ENCODE measurements at regions of chr5 and their contacts with region 1.

Region 1: DNA sequence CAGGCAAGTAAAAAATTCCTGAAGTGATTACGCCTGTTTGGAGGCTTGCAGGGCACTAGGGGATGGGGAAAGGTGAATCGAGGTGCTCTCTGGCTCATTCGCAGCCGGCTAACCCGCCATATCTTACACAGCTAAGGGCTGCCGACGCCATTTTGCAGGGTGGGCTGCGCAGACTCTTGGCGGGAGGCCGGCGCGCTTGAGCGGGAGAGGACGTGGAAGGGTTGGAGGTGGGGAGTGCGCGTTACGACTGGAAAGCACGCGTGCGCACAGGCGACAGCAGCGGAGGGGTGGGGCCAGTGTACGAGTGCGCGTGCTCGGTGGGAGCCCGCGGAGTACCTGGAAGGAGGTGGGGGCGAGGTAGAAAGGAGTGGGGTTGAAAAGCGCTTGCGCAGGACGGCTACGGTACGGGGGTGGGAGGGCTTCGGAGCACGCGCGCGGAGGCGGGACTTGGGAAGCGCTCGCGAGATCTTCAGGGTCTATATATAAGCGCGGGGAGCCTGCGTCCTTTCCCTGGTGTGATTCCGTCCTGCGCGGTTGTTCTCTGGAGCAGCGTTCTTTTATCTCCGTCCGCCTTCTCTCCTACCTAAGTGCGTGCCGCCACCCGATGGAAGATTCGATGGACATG is at the start of gene NPM1:
- DNase-seq: peak; percentile 92
- ATAC-seq: peak; percentile 85
- H3K4me3 Mint-ChIP-seq: peak within 1 kb of the TSS; percentile 99
- H3K27ac Mint-ChIP-seq: peak within 1 kb of the TSS; percentile 98
- H3K4me1 Mint-ChIP-seq: peaks cover 52% of the 10 kb centered on the region
- H3K27me3 Mint-ChIP-seq: no peaks in the 10 kb centered on the region
- CTCF ChIP-seq: no peak
- total RNA-seq, gene NPM1: 1,505 and 1,563 TPM in 2 replicates

Region 2: DNA sequence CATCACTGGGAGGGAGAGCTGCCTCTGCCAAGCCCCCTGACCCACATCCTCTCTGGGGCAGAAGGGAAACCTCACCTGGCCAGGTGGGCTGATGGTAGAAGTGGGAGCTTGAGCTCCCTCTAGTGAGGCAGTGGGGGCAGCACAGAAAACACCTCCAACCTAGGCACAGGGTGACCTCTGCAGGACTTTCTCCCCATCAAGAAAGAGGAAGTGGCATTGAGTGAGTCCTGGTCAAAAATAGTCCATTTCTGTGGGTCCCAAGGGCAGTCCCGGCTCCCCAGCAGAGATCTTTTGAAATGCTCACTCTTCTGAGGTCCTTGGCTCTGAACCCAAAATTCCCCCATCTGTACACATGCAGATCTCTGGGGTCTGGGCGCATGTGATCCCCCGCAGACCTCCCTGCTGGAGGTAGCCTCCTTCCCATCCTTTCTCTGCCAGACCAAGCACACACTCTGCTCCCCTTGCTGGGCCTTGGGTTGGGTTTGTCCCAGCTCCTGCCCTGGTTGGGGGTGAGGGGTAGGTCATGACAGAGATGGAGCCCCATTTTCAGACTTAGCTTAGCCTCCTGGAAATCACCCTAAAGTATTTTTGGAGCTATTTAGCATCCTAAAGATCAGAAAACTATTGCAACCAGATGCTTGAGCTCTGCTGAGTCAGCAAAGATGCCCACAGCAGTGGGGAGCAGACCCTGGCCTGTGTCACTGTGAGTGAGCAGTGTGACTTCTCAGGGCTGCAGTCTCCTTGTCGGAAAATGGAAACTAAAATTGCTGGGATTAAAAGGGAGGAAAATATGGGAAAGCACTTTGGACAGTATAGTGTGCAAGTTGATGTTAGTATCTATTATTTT is 1048.3 kb before region 1 on chr5:
- CTCF ChIA-PET with region 1: no interaction called
- POLR2A ChIA-PET with region 1: no interaction called
- intact Hi-C with region 1: loop called (anchors 10 kb)
- DNase-seq: peak; percentile 35
- ATAC-seq: peak; percentile 90
- H3K4me3 Mint-ChIP-seq: no peak overlapping the region
- H3K27ac Mint-ChIP-seq: no peak overlapping the region
- H3K4me1 Mint-ChIP-seq: peaks cover 20% of the 10 kb centered on the region
- H3K27me3 Mint-ChIP-seq: no peaks in the 10 kb centered on the region
- CTCF ChIP-seq: peak; percentile 48

Region 3: DNA sequence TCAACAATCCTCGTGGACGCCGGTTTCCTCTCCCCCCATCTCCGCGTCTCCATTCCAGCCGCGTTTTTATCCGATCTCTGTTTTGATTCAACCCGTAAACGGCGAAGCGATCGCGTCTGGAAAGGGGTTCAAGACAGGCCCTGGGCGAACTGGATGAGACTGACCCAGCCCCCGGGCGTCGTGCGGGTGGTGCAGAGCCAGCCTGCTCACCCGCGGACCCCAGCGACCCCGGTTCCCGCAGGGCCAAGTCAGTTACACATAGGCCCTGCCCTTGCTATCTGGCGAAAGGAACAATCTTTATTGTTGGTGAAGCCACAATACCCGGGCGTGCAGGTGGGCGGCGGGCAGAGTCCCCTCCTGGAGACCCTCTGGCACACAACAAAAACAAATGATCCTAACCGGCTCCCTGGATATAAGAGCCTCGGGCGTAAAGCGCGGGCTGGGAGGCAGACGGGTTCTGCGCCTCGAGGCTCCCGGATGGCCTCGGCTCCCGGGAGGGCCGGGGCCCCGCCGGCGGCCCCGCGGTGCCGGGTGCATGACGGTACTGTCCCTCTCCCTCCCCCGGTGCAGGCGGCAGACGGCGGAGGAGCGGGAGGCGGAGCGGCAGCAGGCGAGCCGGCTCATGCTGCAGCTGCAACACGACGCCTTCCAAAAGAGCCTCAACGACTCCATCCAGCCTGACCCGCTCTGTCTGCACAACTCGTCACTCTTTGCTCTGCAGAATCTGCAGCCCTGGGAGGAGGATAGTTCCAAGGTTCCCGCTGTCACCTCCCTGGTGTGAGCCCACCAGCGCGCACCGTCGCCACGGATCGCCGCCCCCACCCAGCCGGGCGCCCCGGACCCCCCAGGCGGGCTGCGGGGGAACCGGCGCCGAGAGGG is 76.4 kb before region 1 on chr5:
- CTCF ChIA-PET with region 1: no interaction called
- POLR2A ChIA-PET with region 1: interaction called, 5 read pairs
- intact Hi-C with region 1: loop called (anchors 2 kb)
- DNase-seq: no peak
- ATAC-seq: no peak
- H3K4me3 Mint-ChIP-seq: no peak overlapping the region
- H3K27ac Mint-ChIP-seq: no peak overlapping the region
- H3K4me1 Mint-ChIP-seq: peaks cover 17% of the 10 kb centered on the region
- H3K27me3 Mint-ChIP-seq: peaks cover 51% of the 10 kb centered on the region
- CTCF ChIP-seq: no peak

Region 4: DNA sequence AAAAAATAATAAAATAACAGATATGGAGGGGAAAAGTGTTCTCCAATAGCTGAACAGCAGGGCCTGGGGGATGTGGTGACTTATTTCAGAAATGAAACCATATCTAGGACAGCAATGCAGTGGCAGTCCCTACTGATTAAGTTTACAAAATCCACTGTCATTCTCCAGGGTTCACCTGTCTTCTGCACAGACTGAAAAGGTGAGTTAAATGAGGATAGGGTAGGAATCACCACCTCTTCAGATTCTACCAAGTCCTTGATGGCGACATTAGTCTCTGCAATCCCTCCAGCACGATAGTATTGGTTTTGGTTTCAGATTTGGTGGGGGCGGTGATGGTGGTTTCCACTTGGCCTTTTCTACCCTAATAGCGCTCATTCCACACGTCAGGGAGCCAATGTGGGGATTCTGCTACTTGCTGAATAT is 32.1 kb before region 1 on chr5:
- CTCF ChIA-PET with region 1: no interaction called
- POLR2A ChIA-PET with region 1: no interaction called
- intact Hi-C with region 1: loop called (anchors 2 kb)
- DNase-seq: no peak
- ATAC-seq: peak; percentile 74
- H3K4me3 Mint-ChIP-seq: peak overlapping the region; percentile 59
- H3K27ac Mint-ChIP-seq: no peak overlapping the region
- H3K4me1 Mint-ChIP-seq: peaks cover 2% of the 10 kb centered on the region
- H3K27me3 Mint-ChIP-seq: peaks cover 8% of the 10 kb centered on the region
- CTCF ChIP-seq: no peak

Region 5: DNA sequence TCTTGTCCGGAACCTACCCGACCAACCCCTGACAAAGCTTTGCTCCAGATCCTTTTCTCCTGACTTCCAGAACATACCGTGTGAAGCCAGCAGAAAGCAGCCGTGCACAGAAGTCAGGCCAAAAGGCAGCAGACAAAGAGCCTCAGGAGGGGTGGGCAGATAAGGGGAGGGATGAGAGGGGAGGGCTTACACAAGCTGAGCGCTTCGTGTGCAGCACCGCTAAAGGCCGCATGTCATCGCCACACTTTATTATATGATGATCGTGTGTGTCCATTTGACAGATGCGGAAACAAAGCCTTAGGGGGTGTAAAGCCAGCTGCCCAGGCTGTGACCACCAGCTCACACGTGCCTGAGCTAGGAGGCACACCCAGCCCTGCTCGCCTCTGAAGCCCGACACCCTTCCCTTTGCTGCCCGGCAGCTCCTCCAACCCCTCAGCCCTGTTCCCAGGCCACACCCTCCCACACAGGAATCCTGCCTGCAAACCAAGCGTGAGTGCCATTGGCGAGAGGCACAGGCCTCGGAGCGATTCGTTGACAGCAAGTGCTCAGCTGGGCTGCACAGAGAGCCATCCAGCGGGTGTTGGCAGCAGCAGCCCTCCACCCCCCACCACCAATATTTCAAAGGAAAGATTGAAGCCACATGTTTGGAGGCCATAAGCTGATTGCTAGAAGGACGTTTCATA is 227.7 kb after region 1 on chr5:
- CTCF ChIA-PET with region 1: no interaction called
- POLR2A ChIA-PET with region 1: no interaction called
- intact Hi-C with region 1: no loop called
- DNase-seq: no peak
- ATAC-seq: no peak
- H3K4me3 Mint-ChIP-seq: no peak overlapping the region
- H3K27ac Mint-ChIP-seq: no peak overlapping the region
- H3K4me1 Mint-ChIP-seq: no peaks in the 10 kb centered on the region
- H3K27me3 Mint-ChIP-seq: peaks cover 6% of the 10 kb centered on the region
- CTCF ChIP-seq: no peak

Region 6: DNA sequence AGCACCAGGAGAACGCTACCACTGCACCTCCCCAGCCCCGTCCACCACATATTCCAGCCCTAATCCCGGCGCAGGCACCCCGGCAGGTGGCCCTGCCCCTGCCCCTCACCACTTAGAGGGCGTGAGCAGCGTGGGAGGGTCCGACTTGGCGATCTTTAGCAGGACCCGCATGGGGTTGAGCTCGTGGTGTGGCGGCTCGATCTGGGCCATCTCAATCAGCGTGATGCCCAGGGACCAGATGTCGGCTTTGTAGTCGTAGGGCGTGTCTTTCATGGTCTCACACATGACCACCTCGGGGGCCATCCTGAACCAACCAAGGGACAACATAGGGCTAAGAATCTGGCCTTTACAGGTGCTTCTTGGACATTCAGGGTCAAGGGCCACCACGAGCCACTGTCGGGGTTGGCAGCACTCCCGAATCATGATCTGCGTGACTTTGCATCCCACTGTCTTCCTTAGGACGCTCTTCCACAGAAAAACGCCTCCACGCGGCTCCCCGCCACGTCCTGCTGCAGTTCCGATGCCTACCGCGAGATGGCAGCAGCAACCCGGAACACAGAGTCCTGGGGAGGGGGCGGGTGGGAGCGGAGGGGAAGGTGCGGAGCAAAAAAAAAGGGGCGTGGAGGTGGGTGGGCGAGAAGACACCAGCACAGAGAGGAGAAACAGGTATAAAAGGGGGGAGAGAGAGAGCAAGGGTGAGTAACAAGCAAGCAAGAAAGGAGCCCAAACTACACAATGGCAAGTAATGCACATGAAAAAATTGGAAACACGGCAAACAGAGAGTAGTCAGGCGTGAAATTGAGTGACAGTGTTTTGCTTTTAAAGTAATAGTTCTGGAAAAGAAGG is 719.3 kb after region 1 on chr5:
- CTCF ChIA-PET with region 1: no interaction called
- POLR2A ChIA-PET with region 1: interaction called, 3 read pairs
- intact Hi-C with region 1: loop called (anchors 2 kb)
- DNase-seq: peak; percentile 71
- ATAC-seq: no peak
- H3K4me3 Mint-ChIP-seq: no peak overlapping the region
- H3K27ac Mint-ChIP-seq: peak overlapping the region; percentile 68
- H3K4me1 Mint-ChIP-seq: peaks cover 41% of the 10 kb centered on the region
- H3K27me3 Mint-ChIP-seq: no peaks in the 10 kb centered on the region
- CTCF ChIP-seq: peak; percentile 34

Region 7: DNA sequence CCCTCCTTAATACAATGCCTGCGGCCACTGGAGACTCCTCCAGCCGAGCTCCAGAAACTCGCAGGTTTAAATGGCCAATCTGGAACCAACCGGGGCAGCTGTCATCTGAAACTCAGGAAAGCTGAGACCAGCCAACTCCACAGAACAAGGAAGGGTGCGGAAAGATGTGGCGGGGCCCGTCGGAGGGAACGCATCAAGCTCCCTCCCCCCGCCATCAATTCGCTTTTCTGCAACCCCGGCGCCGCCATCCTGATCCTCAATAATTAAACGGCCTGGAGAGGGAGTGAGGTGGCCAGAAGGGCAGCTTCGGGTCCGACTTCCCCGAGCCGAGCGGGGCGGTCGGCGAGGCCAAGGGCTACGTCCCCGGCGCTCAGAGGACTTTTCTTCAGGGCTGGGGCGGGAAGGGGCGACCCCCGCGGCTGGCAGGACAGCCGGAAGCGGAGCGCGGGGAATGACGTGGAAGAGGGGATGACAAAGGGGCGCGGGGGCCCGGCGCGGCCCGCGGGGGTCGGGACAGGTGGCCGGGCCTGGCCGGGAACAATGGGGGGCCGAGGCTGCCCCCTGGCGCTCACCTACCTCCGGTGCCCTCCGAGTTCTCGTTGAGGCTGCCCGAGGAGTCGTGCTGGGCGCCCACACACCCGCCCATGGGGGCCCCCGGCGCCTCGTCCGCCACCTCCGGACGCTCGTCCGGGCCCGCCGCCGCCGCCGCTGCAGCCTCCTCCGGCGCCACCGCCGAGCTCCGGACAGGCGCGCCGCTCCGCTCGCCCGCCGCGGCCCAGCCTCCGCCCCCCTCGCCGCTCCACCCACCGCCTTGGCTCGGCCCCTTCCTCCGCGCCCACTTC is 895.8 kb after region 1 on chr5 and contains the start of gene UBTD2:
- CTCF ChIA-PET with region 1: no interaction called
- POLR2A ChIA-PET with region 1: no interaction called
- intact Hi-C with region 1: loop called (anchors 5 kb)
- DNase-seq: peak; percentile 90
- ATAC-seq: peak; percentile 88
- H3K4me3 Mint-ChIP-seq: peak within 1 kb of the TSS; percentile 90
- H3K27ac Mint-ChIP-seq: peak within 1 kb of the TSS; percentile 68
- H3K4me1 Mint-ChIP-seq: peaks cover 23% of the 10 kb centered on the region
- H3K27me3 Mint-ChIP-seq: no peaks in the 10 kb centered on the region
- CTCF ChIP-seq: peak; percentile 50
- total RNA-seq, gene UBTD2: 8.5 and 9.0 TPM in 2 replicates

Region 8: GRCh38 chr5:172958331-172959046 is 1571.0 kb after region 1 on chr5:
- CTCF ChIA-PET with region 1: no interaction called
- POLR2A ChIA-PET with region 1: no interaction called
- intact Hi-C with region 1: loop called (anchors 1 kb)
- DNase-seq: peak; percentile 64
- ATAC-seq: peak; percentile 76
- H3K4me3 Mint-ChIP-seq: peak overlapping the region; percentile 97
- H3K27ac Mint-ChIP-seq: peak overlapping the region; percentile 94
- H3K4me1 Mint-ChIP-seq: peaks cover 31% of the 10 kb centered on the region
- H3K27me3 Mint-ChIP-seq: no peaks in the 10 kb centered on the region
- CTCF ChIP-seq: no peak

Measured in activated B cell treated with CpG ODN at 0.5 μM for 24 hours (primary cell).